GM23248 (cell line): ENCODE measurements at regions of chrX and their contacts with region 1.

Region 1: GRCh38 chrX:43958529-43958928 is 14.7 kb downstream of the NDP start:
- DNase-seq: peak; percentile 73
- H3K4me3 ChIP-seq: no peak overlapping the region
- H3K27ac ChIP-seq: no peak overlapping the region
- H3K4me1 ChIP-seq: no peaks in the 10 kb centered on the region
- H3K27me3 ChIP-seq: no peaks in the 10 kb centered on the region

Region 2: GRCh38 chrX:43345166-43345565 is 613.4 kb before region 1 on chrX:
- in situ Hi-C with region 1: no loop called
- DNase-seq: no peak
- H3K4me3 ChIP-seq: no peak overlapping the region
- H3K27ac ChIP-seq: no peak overlapping the region
- H3K4me1 ChIP-seq: no peaks in the 10 kb centered on the region
- H3K27me3 ChIP-seq: no peaks in the 10 kb centered on the region

Region 3: GRCh38 chrX:43540318-43540717 is 418.2 kb before region 1 on chrX:
- in situ Hi-C with region 1: no loop called
- DNase-seq: no peak
- H3K4me3 ChIP-seq: no peak overlapping the region
- H3K27ac ChIP-seq: no peak overlapping the region
- H3K4me1 ChIP-seq: no peaks in the 10 kb centered on the region
- H3K27me3 ChIP-seq: no peaks in the 10 kb centered on the region

Region 4: GRCh38 chrX:44238206-44238605 is 279.7 kb after region 1 on chrX:
- in situ Hi-C with region 1: loop called (anchors 5 kb)
- DNase-seq: no peak
- H3K4me3 ChIP-seq: no peak overlapping the region
- H3K27ac ChIP-seq: no peak overlapping the region
- H3K4me1 ChIP-seq: no peaks in the 10 kb centered on the region
- H3K27me3 ChIP-seq: no peaks in the 10 kb centered on the region

Region 5: GRCh38 chrX:45070116-45071007 is 1111.8 kb after region 1 on chrX:
- in situ Hi-C with region 1: loop called (anchors 25 kb)
- DNase-seq: peak; percentile 52
- H3K4me3 ChIP-seq: no peak overlapping the region
- H3K27ac ChIP-seq: no peak overlapping the region
- H3K4me1 ChIP-seq: no peaks in the 10 kb centered on the region
- H3K27me3 ChIP-seq: no peaks in the 10 kb centered on the region